Body of pancreas (tissue), 4 donors: ENCODE measurements at regions of chr2 and their contacts with region 1.

Region 1: GRCh38 chr2:88055371-88056128 is at the start of gene KRCC1:
- DNase-seq: peak; percentile 95 to 98 (median 97)
- ATAC-seq: peak; percentile 98
- H3K4me3 ChIP-seq: peak within 1 kb of the TSS; percentile 91 to 96
- H3K27ac ChIP-seq: peak within 1 kb of the TSS; percentile 84 to 97 (median 92)
- H3K4me1 ChIP-seq: peaks cover 46% of the 10 kb centered on the region
- H3K27me3 ChIP-seq: no peaks in the 10 kb centered on the region
- CTCF ChIP-seq: peak in 2 of 7 experiments; percentile 16 to 38
- POLR2A ChIP-seq: peak; percentile 89 to 96 (median 94)
- total RNA-seq, gene KRCC1: 9.2 to 14.8 TPM

Region 2: DNA sequence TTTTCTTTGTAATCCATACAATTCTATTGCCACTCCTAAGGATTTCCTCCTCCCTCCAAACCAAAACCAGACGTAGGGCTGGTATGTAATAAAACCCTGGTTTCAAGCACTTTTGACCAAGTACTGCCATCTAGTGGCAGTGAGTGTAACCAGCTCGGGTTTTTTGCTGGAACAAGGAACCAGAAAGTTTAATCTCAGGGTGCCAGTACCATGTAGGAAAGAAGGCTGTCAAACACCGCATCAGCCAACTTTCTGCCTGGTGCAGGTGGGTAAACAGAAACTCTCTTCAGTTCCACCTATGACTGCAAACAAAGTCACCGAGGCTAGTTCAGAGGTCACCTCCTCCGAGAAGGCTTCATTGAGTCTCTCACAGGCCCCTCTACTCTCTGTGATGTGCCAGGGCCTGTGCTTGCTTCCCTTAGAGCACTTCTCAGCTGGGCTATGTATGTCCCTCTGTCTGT is 104.4 kb after region 1 on chr2:
- intact Hi-C with region 1: loop called (anchors 5 kb)
- DNase-seq: peak; percentile 58 to 75 (median 70)
- ATAC-seq: peak; percentile 70
- H3K4me3 ChIP-seq: no peak overlapping the region
- H3K27ac ChIP-seq: no peak overlapping the region
- H3K4me1 ChIP-seq: no peaks in the 10 kb centered on the region
- H3K27me3 ChIP-seq: no peaks in the 10 kb centered on the region
- CTCF ChIP-seq: peak; percentile 66 to 90 (median 86)
- POLR2A ChIP-seq: no peak

Region 3: DNA sequence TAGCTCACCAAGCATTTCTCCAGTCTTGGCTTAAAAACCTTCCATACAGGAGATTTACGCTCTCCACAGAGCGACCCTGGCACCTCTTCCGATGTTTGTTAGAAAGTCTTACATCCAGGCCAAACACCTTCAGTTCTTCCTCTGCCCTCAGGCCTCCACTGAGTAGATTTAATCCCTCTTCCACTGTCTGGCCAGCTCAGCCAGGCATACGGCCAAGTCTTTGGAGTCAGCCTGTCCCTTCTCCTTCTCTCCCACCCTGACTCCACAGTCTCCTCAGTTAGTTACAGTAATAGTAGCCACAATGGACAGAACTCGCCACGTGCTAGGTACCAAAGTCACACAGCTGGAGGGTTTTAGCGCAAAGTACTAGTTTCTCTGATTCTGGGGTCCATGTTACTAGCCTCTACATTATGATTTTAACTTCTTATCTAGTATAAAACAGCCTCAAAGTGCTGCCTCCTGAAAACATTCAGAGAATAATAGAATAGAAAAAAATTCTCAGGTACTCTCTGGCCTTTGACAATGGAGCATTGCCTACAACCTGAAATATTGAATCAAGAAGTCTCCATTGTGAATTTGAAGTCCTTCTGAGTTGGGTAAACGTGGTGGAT is 154.1 kb after region 1 on chr2:
- intact Hi-C with region 1: no loop called
- DNase-seq: no peak
- ATAC-seq: no peak
- H3K4me3 ChIP-seq: no peak overlapping the region
- H3K27ac ChIP-seq: no peak overlapping the region
- H3K4me1 ChIP-seq: no peaks in the 10 kb centered on the region
- H3K27me3 ChIP-seq: no peaks in the 10 kb centered on the region
- CTCF ChIP-seq: no peak
- POLR2A ChIP-seq: no peak

Region 4: GRCh38 chr2:88227446-88227845 is 171.9 kb after region 1 on chr2:
- intact Hi-C with region 1: no loop called
- DNase-seq: no peak
- ATAC-seq: no peak
- H3K4me3 ChIP-seq: no peak overlapping the region
- H3K27ac ChIP-seq: no peak overlapping the region
- H3K4me1 ChIP-seq: no peaks in the 10 kb centered on the region
- H3K27me3 ChIP-seq: no peaks in the 10 kb centered on the region
- CTCF ChIP-seq: no peak
- POLR2A ChIP-seq: no peak

Region 5: DNA sequence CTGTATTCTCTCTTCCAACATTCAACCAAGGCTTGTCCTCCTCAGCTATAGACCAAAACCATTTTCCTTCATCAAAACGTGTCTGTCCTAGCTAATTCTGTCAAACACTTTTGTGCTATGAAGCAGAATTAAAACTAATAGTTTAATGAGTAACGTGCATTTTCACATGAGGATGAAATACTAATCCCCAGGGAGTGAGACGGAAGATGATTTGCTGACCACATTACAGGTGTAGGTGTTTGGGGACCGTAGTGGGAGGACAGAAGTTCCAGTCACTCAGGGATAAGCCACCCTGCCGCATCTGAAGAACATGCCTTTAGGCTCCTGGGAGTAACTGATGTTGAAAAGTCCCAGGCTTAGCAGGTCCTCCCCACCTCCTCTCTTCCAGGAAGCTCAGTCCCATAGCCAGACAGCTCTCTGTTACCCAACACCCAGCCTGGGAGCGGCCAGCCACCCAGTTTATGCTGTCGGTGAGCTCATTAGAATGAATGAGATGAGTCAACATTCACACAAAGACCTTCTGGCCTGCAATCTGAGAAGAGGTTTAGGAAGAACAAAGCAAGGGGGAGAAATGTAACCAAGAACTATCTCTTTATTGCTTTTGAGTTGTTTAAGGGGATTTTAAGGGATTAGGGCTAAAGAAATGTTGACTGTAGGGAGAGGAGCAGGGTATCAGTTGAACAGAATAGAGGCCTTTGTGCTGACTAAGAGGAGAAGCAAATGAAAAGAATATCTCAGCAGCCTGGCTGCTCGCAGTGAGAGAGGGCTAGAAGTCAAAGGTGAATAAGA is 274.5 kb after region 1 on chr2:
- intact Hi-C with region 1: no loop called
- DNase-seq: peak in 1 of 4 donors; percentile 6
- ATAC-seq: no peak
- H3K4me3 ChIP-seq: no peak overlapping the region
- H3K27ac ChIP-seq: no peak overlapping the region
- H3K4me1 ChIP-seq: no peaks in the 10 kb centered on the region
- H3K27me3 ChIP-seq: no peaks in the 10 kb centered on the region
- CTCF ChIP-seq: no peak
- POLR2A ChIP-seq: no peak